ENCODE measurements at regions of chr6 and their contacts with region 1.

Region 1: DNA sequence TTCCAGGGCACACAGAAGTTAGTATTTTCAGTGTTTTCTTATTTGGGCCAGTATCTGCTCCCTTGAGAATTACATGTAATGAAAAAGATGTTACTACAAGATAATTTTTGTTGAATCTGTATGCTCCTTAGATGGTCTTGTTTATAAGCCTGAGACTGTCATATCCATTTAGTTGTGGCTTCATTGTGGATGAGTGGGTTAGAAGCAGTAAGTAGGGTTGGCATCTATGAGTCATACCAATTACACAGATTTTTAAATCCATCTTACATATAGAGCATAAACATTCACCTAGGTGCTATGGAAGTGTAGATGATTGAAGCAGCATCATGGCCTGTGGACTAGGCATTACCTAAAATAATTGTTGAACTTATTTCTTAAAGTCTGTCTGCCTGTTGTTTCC is 13.5 kb upstream of the BAG2 start:
- DNase-seq: no peak
- ATAC-seq: no peak
- H3K4me3 ChIP-seq: no peak overlapping the region
- H3K4me3 Mint-ChIP-seq: no peak overlapping the region
- H3K27ac ChIP-seq: no peak overlapping the region
- H3K27ac Mint-ChIP-seq: no peak overlapping the region
- H3K4me1 ChIP-seq: no peaks in the 10 kb centered on the region
- H3K4me1 Mint-ChIP-seq: no peaks in the 10 kb centered on the region
- H3K27me3 ChIP-seq: no peaks in the 10 kb centered on the region
- H3K27me3 Mint-ChIP-seq: no peaks in the 10 kb centered on the region

Region 2: DNA sequence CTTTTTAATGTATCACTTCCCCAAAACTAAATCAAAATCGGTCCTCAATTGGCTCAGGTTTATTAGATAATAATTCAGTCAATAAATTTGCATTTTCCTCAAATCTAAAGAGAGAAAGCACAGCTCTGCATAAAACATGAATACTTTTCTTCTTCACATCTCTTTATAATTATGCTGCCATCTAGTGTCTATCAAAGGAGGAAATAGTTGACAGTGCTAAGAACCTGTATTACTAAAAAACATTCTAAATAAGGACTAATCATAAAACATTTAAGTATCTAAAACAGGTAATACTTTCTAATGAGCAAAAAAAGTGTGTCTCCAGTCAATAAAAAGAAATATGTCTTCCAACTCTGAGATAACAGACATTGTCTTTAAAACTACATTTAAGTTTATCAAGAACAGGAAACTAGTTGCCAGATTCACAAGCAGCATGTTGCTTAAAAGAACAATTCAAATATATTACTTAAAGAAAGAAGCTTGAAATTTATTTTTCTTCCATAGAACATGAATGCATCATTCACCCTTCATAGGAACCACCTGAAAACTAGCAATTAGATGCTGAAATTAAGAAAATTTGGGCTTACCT is 459.5 kb before region 1 on chr6:
- CTCF ChIA-PET with region 1: interaction called in 1 of 2 experiments, 12 read pairs
- POLR2A ChIA-PET with region 1: no interaction called
- DNase-seq: peak in 1 of 35 experiments; percentile 2
- ATAC-seq: no peak
- H3K4me3 ChIP-seq: no peak overlapping the region
- H3K4me3 Mint-ChIP-seq: no peak overlapping the region
- H3K27ac ChIP-seq: no peak overlapping the region
- H3K27ac Mint-ChIP-seq: no peak overlapping the region
- H3K4me1 ChIP-seq: no peaks in the 10 kb centered on the region
- H3K4me1 Mint-ChIP-seq: no peaks in the 10 kb centered on the region
- H3K27me3 ChIP-seq: no peaks in the 10 kb centered on the region
- H3K27me3 Mint-ChIP-seq: peaks cover 0 to 4% of the 10 kb centered on the region in 2 donors

Region 3: DNA sequence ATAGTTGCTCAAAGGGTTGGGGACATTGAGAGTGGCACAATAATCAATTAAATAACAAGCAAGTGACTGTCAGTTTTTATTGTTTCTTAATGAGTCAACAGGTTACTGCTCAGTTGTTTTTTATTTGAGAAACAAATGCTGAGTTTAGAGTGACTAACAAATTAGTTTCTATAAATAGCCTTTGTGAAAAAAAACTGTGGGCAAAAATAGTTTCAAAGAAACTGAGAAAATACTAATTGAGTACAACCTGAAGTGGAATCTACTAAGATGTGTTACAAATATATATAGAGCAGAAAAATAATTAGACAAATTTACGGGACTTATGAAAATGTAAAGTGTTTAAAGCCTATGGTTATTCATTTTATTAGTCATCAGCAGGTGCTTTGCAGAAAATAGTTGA is 181.5 kb before region 1 on chr6:
- CTCF ChIA-PET with region 1: no interaction called
- POLR2A ChIA-PET with region 1: no interaction called
- DNase-seq: no peak
- ATAC-seq: no peak
- H3K4me3 ChIP-seq: no peak overlapping the region
- H3K4me3 Mint-ChIP-seq: no peak overlapping the region
- H3K27ac ChIP-seq: no peak overlapping the region
- H3K27ac Mint-ChIP-seq: no peak overlapping the region
- H3K4me1 ChIP-seq: no peaks in the 10 kb centered on the region
- H3K4me1 Mint-ChIP-seq: no peaks in the 10 kb centered on the region
- H3K27me3 ChIP-seq: no peaks in the 10 kb centered on the region
- H3K27me3 Mint-ChIP-seq: peaks cover 0 to 3% of the 10 kb centered on the region in 2 donors

Measured in T-cell (primary cell).